Dorsolateral prefrontal cortex (tissue), 120 donors: ENCODE measurements at regions of chr6 and their contacts with region 1.

Region 1: DNA sequence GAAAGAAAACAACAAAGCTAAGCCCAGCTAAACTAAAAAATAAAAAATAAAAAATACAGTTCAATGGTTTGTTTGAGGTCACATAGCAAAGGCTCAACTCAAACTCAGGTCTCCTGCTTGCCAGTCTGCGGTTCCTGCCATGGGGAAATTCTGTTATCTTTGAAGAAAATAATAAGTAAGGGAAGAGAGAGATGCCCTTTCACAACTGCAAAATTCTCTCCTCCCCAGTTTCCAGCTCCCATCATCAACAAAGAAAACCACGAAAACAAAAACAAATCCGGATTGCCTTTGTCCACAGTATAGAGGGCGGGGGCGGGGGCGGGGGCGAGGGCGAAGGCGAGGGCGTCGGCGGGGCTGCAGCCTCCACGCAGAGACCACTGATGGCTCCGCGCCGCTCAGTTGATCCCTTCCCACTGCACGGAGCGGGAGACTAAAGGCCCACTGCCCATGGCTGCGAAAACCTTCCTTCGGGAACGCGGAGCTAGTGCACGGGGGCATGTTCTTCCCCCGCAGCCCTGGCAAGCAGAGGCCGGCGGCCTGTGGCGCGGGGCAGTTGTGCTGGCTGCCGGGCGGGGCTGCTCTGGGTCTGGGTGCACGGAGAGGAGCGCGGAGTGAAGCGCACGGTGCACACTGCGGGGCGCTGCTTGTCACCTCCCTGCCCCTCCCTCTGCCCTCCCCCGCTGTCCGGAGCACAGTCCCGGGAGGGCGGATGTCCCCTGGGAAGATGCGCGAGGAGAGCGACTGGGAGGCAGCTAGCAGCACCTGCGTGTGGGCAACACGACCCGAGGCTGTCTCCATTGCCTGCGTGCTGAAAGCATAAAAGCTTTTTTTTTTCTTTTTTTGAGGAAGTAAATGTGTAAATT is 54.1 kb upstream of the TPD52L1 start:
- DNase-seq: peak; percentile 10 to 87 (median 74)
- H3K4me3 ChIP-seq: peak overlapping the region; percentile 46 to 83 (median 66)
- H3K27ac ChIP-seq: peak overlapping the region; percentile 27 to 96 (median 87)
- H3K27me3 ChIP-seq: no peaks in the 10 kb centered on the region
- CTCF ChIP-seq: peak in 22 of 56 donors; percentile 9 to 54 (median 27)

Region 2: GRCh38 chr6:124947971-124948451 is 151.4 kb before region 1 on chr6:
- intact Hi-C with region 1: no loop called
- DNase-seq: no peak
- H3K4me3 ChIP-seq: no peak overlapping the region
- H3K27ac ChIP-seq: no peak overlapping the region
- H3K27me3 ChIP-seq: no peaks in the 10 kb centered on the region
- CTCF ChIP-seq: no peak

Region 3: GRCh38 chr6:124977067-124977908 is 122.2 kb before region 1 on chr6:
- intact Hi-C with region 1: no loop called
- DNase-seq: no peak
- H3K4me3 ChIP-seq: no peak overlapping the region
- H3K27ac ChIP-seq: no peak overlapping the region
- H3K27me3 ChIP-seq: no peaks in the 10 kb centered on the region
- CTCF ChIP-seq: no peak

Region 4: GRCh38 chr6:125041740-125042459 is 57.5 kb before region 1 on chr6:
- intact Hi-C with region 1: loop called in 1 of 2 experiments (anchors 5 kb)
- DNase-seq: no peak
- H3K4me3 ChIP-seq: no peak overlapping the region
- H3K27ac ChIP-seq: peak overlapping the region in 6 of 59 donors; percentile 4 to 84 (median 63)
- H3K27me3 ChIP-seq: no peaks in the 10 kb centered on the region
- CTCF ChIP-seq: no peak

Region 5: DNA sequence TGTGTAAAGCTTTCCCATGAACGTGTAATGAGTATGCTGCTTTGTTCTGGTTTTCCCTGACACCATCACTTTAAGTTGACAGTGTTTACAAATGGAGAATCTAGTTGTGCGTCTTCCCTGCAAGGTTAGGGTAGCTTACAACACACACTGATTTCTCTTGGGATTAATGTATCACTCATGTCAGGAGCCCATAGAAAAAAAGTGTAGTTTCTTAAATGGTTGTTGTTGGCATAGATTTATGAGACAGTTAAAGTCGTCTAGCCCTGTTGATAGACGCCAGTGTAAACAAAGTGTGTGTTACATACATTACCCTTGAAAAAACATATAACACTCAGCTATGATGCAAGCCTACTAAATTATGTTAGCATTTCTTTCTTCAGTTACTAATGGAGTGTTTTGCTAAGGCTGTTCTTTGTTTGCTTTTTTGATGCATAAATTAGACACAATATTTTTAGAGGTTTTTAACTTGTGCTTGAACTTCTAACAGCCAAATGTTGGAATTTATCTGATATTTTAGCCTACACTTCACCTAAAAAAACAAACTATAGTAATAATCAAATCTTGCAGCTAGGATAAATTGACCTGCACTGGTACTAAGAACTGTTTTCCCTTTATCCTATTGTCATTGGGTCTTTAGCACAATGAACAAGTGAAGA is 48.7 kb before region 1 on chr6:
- intact Hi-C with region 1: loop called (anchors 5 kb)
- DNase-seq: no peak
- H3K4me3 ChIP-seq: no peak overlapping the region
- H3K27ac ChIP-seq: no peak overlapping the region
- H3K27me3 ChIP-seq: no peaks in the 10 kb centered on the region
- CTCF ChIP-seq: no peak

Region 6: GRCh38 chr6:125444006-125444923 is 344.8 kb after region 1 on chr6:
- intact Hi-C with region 1: no loop called
- DNase-seq: peak in 1 of 10 donors; percentile 9
- H3K4me3 ChIP-seq: peak overlapping the region in 3 of 59 donors; percentile 1 to 18 (median 12)
- H3K27ac ChIP-seq: peak overlapping the region in 12 of 59 donors; percentile 2 to 74 (median 44)
- H3K27me3 ChIP-seq: no peaks in the 10 kb centered on the region
- CTCF ChIP-seq: no peak